PC-3 (cell line): ENCODE measurements at regions of chrX and their contacts with region 1.

Region 1: DNA sequence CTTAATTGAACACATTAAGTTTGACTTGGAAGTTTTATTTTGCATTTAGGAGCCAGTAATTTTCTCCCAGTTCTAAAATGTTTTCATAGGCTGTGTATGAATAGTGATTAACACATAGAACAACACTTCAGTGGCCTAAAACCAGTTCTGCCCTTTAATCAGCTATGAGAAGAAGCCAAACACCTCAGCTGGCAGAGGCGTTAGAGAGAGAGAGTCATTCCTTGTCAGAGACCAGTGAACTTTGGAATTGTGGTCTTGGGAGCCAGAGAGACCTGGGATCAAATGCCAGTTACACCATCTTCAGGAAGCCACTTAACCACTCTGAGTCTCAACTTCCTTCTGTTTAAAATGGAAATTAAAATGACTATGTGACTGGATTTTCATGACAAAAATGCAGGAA is 39.3 kb upstream of the PRPS2 start:
- DNase-seq: no peak
- ATAC-seq: no peak
- H3K4me3 ChIP-seq: no peak overlapping the region
- H3K27ac ChIP-seq: no peak overlapping the region
- H3K4me1 ChIP-seq: no peaks in the 10 kb centered on the region
- H3K27me3 ChIP-seq: no peaks in the 10 kb centered on the region
- CTCF ChIP-seq: no peak

Region 2: GRCh38 chrX:12426420-12426819 is 325.5 kb before region 1 on chrX:
- CTCF ChIA-PET with region 1: no interaction called
- POLR2A ChIA-PET with region 1: interaction called, 12 read pairs
- intact Hi-C with region 1: no loop called
- DNase-seq: no peak
- ATAC-seq: no peak
- H3K4me3 ChIP-seq: no peak overlapping the region
- H3K27ac ChIP-seq: no peak overlapping the region
- H3K4me1 ChIP-seq: no peaks in the 10 kb centered on the region
- H3K27me3 ChIP-seq: no peaks in the 10 kb centered on the region
- CTCF ChIP-seq: no peak

Region 3: DNA sequence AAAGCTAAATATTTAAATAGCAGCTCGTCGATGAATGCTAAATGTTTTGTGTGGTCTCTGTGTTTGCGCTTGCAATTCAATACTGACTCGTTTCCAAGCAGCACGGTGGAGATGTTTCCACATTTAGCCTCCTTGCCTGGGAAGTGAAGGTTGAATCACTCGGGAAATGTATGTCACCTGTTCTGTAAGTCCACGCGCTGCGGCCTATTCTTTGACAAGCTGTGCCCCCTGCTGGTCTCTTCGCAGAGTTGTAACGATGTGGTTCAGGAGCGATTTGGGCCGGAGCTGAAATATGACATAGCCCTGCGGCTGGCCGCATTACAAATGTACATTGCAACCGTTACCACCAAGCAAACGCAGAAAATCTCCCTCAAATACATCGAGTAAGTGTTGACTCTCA is 50.3 kb before region 1 on chrX:
- CTCF ChIA-PET with region 1: no interaction called
- POLR2A ChIA-PET with region 1: no interaction called
- intact Hi-C with region 1: no loop called
- DNase-seq: peak; percentile 84
- ATAC-seq: peak; percentile 97
- H3K4me3 ChIP-seq: no peak overlapping the region
- H3K27ac ChIP-seq: no peak overlapping the region
- H3K4me1 ChIP-seq: 0 out of 2 replicates have a peak, but pooled peaks cover 3% of the 10 kb centered on the region
- H3K27me3 ChIP-seq: no peaks in the 10 kb centered on the region
- CTCF ChIP-seq: peak; percentile 79